A673 (cell line): ENCODE measurements at regions of chr2 and their contacts with region 1.

Region 1: DNA sequence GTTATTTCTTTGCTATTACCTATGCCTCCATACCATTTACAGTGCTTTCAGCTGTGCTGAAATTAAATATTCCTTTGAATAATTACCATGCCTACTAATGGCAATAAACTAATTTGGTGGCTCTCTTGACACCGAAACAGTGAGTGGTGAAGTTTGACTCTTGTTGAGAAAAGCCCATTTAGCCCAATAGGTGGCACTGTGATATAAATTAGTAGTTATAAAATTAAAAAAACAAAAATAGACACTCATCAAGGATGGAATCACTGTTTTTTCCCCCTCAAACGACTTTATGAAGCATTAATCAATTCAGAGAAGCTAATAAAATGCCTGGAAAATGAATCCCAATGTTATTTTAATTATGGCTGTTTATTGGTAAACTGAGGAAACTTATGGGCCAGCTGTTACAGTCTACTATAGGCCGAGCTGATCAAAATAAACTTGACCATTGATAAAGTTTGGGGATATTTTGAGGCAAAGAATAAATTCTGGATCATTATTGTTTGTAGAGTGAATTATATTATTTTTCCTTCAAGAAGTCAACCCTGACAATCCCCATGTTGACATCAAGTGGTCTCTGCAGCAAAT is 339.6 kb downstream of the TRIB2 start:
- DNase-seq: peak; percentile 48
- H3K4me3 ChIP-seq: no peak overlapping the region
- H3K27ac ChIP-seq: no peak overlapping the region
- H3K4me1 ChIP-seq: no peaks in the 10 kb centered on the region
- H3K27me3 ChIP-seq: no peaks in the 10 kb centered on the region
- CTCF ChIP-seq: peak; percentile 64; the same call in 1 of the 2 replicates

Region 2: GRCh38 chr2:13413989-13414388 is 357.6 kb after region 1 on chr2:
- CTCF ChIA-PET with region 1: no interaction called
- POLR2A ChIA-PET with region 1: no interaction called
- intact Hi-C with region 1: loop called (anchors 10 kb)
- DNase-seq: peak; percentile 8
- H3K4me3 ChIP-seq: no peak overlapping the region
- H3K27ac ChIP-seq: no peak overlapping the region
- H3K4me1 ChIP-seq: no peaks in the 10 kb centered on the region
- H3K27me3 ChIP-seq: no peaks in the 10 kb centered on the region
- CTCF ChIP-seq: 0 out of 2 replicates have a peak, but pooled peaks have one; percentile 14

Region 3: DNA sequence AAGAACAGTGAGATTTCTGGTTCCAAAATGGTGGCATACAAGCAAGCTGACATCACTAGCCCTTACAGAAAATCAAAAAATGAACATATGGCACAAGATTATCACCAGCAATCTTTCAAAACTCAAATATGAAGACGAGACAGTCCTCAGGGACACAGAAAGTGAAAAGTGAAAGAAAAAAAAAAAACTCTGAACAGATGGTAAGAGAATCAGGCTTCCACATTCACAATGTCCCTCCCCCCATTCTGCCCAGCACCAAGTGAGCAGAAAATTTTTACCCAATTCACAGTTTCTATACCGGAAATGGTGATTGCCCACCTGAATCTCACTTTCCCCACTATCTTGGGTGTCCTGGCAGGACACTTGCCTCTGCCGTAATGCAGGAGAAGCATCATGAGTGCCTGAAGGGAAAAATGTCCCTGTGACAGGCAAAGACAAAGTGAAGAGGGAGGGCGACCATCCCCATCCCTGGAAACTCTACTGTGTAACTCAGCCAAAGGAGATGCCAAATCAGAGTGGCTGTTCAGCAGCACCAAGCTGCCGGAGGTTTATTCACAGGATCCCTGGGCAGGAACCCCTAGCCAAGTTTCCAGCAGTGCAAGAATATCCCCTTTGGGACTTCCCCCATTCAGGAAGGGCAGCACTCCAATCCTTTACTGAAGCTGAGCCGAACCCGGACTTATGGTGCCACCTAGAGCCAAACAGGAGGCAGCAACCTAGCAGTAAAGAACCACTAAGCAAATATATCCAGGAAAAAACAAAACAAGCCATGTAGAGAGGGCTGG is 1888.4 kb after region 1 on chr2:
- CTCF ChIA-PET with region 1: no interaction called
- POLR2A ChIA-PET with region 1: no interaction called
- intact Hi-C with region 1: loop called (anchors 5 kb)
- DNase-seq: peak; percentile 82
- H3K4me3 ChIP-seq: no peak overlapping the region
- H3K27ac ChIP-seq: no peak overlapping the region
- H3K4me1 ChIP-seq: peaks cover 7% of the 10 kb centered on the region
- H3K27me3 ChIP-seq: peaks cover 39% of the 10 kb centered on the region
- CTCF ChIP-seq: peak; percentile 78